PC-9 (cell line): ENCODE measurements at regions of chr22 and their contacts with region 1.

Region 1: DNA sequence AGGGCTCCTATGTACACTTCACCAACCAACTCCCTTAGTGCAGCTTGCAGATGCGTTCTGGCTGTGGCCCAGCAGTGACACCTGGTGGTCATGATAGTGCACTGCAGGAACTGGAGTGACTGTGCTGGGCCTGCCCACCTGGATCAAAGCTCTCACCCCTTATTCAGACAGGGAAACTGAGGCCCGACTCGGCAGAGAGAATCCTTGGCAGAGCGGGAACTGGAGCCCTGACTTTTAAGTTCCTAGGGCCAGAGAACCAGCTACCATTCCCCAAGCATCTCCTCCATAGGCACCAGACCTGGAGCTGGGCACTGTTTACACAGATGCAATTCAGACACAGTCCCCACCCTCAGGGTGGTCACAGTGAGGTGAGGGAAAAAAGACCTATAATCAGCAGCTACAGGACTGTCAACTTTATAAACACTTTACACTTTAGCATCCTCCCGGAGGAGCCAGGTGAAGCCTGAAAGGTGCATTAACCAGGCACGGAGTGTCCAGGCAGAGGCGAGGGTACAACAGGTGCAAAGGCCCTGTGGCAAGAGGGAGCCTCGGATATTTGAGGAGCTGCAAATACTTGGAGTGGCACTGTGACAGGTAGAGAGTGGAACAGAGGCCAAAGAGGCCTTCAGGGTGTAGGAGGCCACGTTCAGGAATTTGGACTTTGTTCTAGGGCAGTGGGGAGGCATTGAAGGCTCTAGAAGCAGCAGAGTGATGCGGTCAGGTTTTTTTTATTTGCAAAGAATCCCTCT is 22.0 kb downstream of the RHBDD3 start:
- DNase-seq: peak in 1 of 2 experiments; percentile 52
- H3K4me3 ChIP-seq: no peak overlapping the region
- H3K27ac ChIP-seq: no peak overlapping the region
- H3K4me1 ChIP-seq: no peaks in the 10 kb centered on the region
- H3K27me3 ChIP-seq: 0 out of 2 replicates have a peak, but pooled peaks cover 4% of the 10 kb centered on the region
- CTCF ChIP-seq: peak; percentile 97

Region 2: DNA sequence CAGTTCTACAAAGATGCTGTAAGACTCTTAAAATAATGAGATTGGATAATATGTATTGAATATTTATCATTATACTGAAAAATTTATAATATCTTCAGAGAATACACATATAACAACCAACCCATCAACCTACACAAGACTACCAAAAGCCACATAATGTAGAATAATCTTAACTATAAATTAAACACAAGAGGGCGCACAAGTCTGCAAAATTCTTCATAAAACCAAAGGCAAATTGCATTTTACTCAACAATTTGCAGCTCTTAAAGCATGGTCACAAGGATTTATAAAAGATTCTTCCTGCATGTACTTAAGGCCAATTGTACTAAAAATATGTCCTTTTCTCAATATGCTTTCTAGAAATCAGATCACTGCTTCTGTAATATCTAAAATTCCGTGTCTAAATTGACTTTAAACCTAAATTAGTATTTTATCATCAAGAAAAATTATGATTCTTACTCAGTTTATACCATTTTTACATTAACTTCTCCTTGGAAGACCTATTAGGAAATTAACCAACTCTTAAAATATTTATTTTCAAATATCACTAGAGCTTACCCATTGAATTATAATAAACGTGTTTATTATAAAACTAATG is 645.2 kb before region 1 on chr22:
- CTCF ChIA-PET with region 1: no interaction called
- POLR2A ChIA-PET with region 1: no interaction called
- intact Hi-C with region 1: loop called (anchors 2 kb)
- DNase-seq: peak in 1 of 2 experiments; percentile 40
- H3K4me3 ChIP-seq: no peak overlapping the region
- H3K27ac ChIP-seq: no peak overlapping the region
- H3K4me1 ChIP-seq: no peaks in the 10 kb centered on the region
- H3K27me3 ChIP-seq: no peaks in the 10 kb centered on the region
- CTCF ChIP-seq: peak; percentile 78

Region 3: DNA sequence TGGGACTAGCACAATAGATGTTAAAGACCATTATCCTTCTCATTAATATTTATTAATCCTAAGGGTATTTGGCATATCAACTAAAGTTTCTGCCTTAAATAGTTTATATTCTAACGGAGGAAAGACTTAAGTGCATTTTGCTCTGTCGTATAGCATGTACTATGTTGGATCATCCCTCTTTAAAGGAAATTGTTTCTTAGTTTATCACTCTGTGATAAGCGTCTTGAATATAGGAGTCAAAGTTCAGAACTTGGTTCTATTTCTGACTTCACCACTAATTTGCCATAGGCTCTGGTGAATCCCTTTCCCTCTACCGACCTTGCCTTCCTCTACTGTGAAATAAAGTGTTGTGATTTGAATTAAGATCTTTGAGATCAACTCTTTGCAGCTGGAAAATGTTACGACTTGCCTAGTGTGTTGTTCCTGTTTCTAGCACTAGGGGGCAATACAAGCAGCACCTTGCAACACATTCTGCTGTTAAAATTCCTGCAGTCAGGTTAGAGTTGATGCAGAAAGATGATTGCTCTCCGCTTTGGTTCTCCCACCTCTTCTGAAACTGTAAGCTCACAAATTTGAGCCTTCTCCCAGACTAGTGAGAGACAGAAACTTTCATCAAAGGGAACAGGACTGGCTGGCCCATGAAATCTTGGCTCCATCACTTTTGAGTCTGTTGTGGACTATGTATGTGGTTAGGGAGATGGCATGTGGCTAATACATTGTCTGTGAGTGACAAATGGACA is 390.3 kb before region 1 on chr22:
- CTCF ChIA-PET with region 1: no interaction called
- POLR2A ChIA-PET with region 1: no interaction called
- intact Hi-C with region 1: loop called (anchors 10 kb)
- DNase-seq: peak; percentile 17 to 41
- H3K4me3 ChIP-seq: no peak overlapping the region
- H3K27ac ChIP-seq: no peak overlapping the region
- H3K4me1 ChIP-seq: no peaks in the 10 kb centered on the region
- H3K27me3 ChIP-seq: no peaks in the 10 kb centered on the region
- CTCF ChIP-seq: peak; percentile 97